Right lobe of liver (tissue), 6 donors: ENCODE measurements at regions of chr6 and their contacts with region 1.

Region 1: GRCh38 chr6:2639896-2640295 is 110.8 kb downstream of the MYLK4 start:
- DNase-seq: no peak
- ATAC-seq: no peak
- H3K4me3 ChIP-seq: no peak overlapping the region
- H3K27ac ChIP-seq: no peak overlapping the region
- H3K4me1 ChIP-seq: no peaks in the 10 kb centered on the region
- H3K27me3 ChIP-seq: no peaks in the 10 kb centered on the region
- CTCF ChIP-seq: no peak
- POLR2A ChIP-seq: no peak

Region 2: DNA sequence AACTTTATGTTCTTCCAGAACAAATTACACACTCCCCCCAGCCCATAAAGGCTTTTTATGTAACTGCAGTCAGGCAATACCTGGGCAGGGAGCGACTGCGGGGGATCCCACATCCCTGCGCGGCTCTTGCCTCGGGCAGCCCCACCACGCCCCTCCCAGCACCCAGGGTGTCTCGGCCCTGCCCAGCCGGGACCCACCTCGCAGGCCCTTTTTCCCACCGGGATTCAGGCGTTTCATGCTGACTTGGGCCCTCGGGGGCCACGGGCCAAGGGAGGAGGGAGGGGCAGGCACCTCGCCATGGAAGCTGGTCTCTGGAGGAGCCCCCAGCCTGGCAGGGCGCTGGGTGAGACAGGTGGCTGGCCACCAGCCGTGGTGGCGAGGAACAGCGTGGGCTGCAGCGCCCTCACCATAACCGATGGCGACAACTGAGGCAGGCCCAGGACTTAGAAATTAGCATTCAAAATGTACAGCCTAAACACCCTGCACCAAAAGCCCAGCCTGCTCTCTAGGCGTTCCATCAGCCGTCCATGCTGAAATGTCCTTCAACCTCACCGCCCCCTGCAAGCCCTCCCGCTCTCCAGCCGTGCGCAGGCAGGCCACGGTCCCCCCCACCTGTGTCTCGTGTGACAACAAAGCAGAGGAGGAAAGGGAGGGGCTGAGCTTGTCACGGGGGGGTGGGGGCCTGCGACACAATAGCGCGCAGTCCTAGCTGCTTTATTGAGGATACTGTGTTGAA is 1045.3 kb before region 1 on chr6:
- intact Hi-C with region 1: loop called in 1 of 2 experiments (anchors 5 kb)
- DNase-seq: peak in 1 of 3 donors; percentile 51
- ATAC-seq: no peak
- H3K4me3 ChIP-seq: no peak overlapping the region
- H3K27ac ChIP-seq: no peak overlapping the region
- H3K4me1 ChIP-seq: no peaks in the 10 kb centered on the region
- H3K27me3 ChIP-seq: peaks cover 0 to 7% of the 10 kb centered on the region in 2 donors
- CTCF ChIP-seq: no peak
- POLR2A ChIP-seq: no peak